ENCODE measurements at regions of chr19 and their contacts with region 1.

Region 1: DNA sequence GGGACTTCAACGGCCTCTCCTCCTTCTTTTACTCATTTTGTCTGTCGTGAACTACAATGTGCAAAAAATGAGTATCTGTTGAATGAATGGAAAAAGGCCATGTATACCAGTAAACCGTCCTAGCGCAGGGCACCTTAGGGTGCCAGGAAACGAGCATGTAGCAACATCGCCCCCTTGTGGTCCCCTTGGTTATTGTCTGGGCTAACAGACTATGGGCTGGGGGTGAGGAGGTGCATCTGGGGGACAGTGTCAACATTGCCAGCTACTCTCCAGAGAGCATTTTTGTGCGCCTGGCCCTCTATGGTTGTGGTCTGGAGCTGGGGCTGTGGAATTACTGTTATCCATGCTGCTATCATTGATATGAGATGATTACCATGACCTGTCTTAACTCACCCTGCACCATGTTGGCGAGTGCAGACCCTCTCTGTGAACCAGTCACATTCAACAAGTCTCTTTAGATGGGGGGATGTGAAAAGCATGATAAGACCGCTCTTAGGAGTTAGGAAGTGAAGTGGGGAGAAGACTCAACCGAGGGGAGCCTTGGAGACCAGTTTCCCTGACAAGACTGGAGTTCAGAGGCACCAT is 22.8 kb upstream of the SIGLEC11 start:
- DNase-seq: peak; percentile 49 to 79 (median 67)
- ATAC-seq: peak; percentile 73
- H3K4me3 ChIP-seq: no peak overlapping the region
- H3K4me3 Mint-ChIP-seq: no peak overlapping the region
- H3K27ac ChIP-seq: no peak overlapping the region
- H3K27ac Mint-ChIP-seq: no peak overlapping the region
- H3K4me1 ChIP-seq: no peaks in the 10 kb centered on the region
- H3K4me1 Mint-ChIP-seq: peaks cover 0 to 7% (median 0%) of the 10 kb centered on the region in 7 donors
- H3K27me3 ChIP-seq: no peaks in the 10 kb centered on the region
- H3K27me3 Mint-ChIP-seq: no peaks in the 10 kb centered on the region

Region 2: GRCh38 chr19:49869441-49870176 is 114.1 kb before region 1 on chr19:
- CTCF ChIA-PET with region 1: no interaction called
- POLR2A ChIA-PET with region 1: no interaction called
- intact Hi-C with region 1: loop called in 1 of 2 experiments (anchors 10 kb)
- DNase-seq: peak; percentile 83 to 94 (median 87)
- ATAC-seq: peak; percentile 87
- H3K4me3 ChIP-seq: peak overlapping the region; percentile 58
- H3K4me3 Mint-ChIP-seq: peak overlapping the region in 2 of 10 donors; percentile 87
- H3K27ac ChIP-seq: peak overlapping the region; percentile 72
- H3K27ac Mint-ChIP-seq: peak overlapping the region in 5 of 9 donors; percentile 59 to 87 (median 74)
- H3K4me1 ChIP-seq: peaks cover 31 to 38% of the 10 kb centered on the region in 2 donors
- H3K4me1 Mint-ChIP-seq: peaks cover 25 to 51% (median 45%) of the 10 kb centered on the region in 7 donors
- H3K27me3 ChIP-seq: no peaks in the 10 kb centered on the region
- H3K27me3 Mint-ChIP-seq: no peaks in the 10 kb centered on the region

Region 3: DNA sequence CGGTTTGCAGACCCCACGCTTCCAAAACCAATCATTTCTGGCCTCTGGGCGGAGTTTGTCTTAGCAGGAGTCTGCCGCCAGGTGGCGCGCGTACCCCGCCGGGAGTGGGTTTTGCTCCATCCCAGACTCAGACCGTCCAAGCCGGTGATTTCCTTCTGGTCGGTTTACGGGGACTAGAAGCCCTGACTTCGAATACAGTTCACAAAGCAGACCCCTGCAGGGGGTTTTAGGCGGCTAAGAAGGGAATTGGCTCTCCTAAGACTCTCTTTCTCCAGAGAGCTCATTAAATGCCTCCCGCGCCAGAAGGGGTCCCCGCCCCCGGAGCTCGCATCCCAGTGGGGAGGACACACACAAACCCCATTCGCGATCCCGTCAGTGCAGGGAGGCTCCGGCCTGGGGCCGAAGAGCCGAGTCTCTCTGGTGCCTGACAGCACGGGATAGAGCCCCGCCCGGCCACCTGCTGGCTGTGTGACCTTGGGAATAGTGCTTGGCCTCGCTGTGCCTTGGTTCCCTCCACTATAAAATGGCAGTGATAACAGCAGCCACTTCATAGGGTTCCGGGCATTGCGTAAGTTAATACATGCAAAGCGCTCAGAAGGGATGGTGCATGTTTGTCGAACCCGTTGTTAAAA is 45.9 kb before region 1 on chr19:
- CTCF ChIA-PET with region 1: interaction called, 8 read pairs
- POLR2A ChIA-PET with region 1: no interaction called
- intact Hi-C with region 1: loop called (anchors 1 kb)
- DNase-seq: peak; percentile 40 to 86 (median 66)
- ATAC-seq: peak; percentile 89
- H3K4me3 ChIP-seq: no peak overlapping the region
- H3K4me3 Mint-ChIP-seq: peak overlapping the region in 3 of 10 donors; percentile 17 to 29 (median 21)
- H3K27ac ChIP-seq: no peak overlapping the region
- H3K27ac Mint-ChIP-seq: no peak overlapping the region
- H3K4me1 ChIP-seq: peaks cover 13% of the 10 kb centered on the region in 2 donors
- H3K4me1 Mint-ChIP-seq: peaks cover 14 to 26% (median 19%) of the 10 kb centered on the region in 7 donors
- H3K27me3 ChIP-seq: no peaks in the 10 kb centered on the region
- H3K27me3 Mint-ChIP-seq: peaks cover 0 to 11% (median 0%) of the 10 kb centered on the region in 5 donors

Region 4: DNA sequence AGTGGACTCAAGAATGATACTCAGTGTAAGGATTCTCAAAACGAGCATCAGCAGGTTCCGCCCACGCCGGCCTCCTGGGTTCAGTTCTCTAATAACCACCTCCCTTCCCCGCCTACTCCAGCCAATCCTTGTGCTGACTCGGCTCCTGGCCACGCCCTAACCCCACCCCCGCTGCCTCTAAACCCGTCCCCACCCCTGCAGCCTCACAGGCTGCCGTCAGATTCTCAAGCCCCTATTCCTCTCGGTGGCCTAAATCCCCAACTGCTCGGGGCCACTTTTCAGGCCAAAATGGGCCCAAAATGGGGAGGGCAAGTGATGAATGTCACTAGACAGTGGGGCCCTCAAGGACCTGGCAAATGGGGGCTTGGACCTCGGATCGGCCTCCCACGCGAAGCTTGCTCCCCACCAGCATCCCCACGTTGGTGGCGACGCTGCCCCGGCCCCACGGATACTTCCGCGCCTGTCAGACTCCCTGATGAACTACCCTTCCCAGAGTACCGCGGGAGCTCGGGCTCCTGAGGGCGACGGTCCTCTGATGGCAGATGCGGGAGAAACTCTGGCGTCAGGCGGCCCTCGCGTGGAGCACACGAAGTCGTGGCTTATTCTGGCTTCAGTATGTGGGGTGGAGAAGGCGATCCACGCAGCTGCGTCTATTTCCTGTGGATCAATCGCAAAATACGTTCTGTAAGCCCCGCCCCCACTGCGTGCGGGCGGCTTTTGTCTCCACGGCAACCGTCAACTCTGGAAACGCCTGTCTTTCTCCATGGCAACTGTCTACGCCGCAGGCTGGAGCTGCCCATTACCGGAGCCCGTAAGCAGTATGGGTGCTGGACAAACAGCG is 66.9 kb after region 1 on chr19:
- CTCF ChIA-PET with region 1: no interaction called
- POLR2A ChIA-PET with region 1: no interaction called
- intact Hi-C with region 1: loop called in 1 of 2 experiments (anchors 1 kb)
- DNase-seq: peak; percentile 58 to 86 (median 79)
- ATAC-seq: peak; percentile 90
- H3K4me3 ChIP-seq: peak overlapping the region; percentile 85
- H3K4me3 Mint-ChIP-seq: peak overlapping the region; percentile 78 to 99 (median 90)
- H3K27ac ChIP-seq: peak overlapping the region; percentile 85
- H3K27ac Mint-ChIP-seq: peak overlapping the region; percentile 73 to 97 (median 89)
- H3K4me1 ChIP-seq: peaks cover 0 to 13% of the 10 kb centered on the region in 2 donors
- H3K4me1 Mint-ChIP-seq: peaks cover 5 to 20% (median 14%) of the 10 kb centered on the region in 7 donors
- H3K27me3 ChIP-seq: no peaks in the 10 kb centered on the region
- H3K27me3 Mint-ChIP-seq: peaks cover 0 to 6% (median 0%) of the 10 kb centered on the region in 5 donors

Region 5: GRCh38 chr19:50272263-50272897 is 288.6 kb after region 1 on chr19:
- CTCF ChIA-PET with region 1: no interaction called
- POLR2A ChIA-PET with region 1: no interaction called
- intact Hi-C with region 1: no loop called
- DNase-seq: no peak
- ATAC-seq: no peak
- H3K4me3 ChIP-seq: no peak overlapping the region
- H3K4me3 Mint-ChIP-seq: no peak overlapping the region
- H3K27ac ChIP-seq: no peak overlapping the region
- H3K27ac Mint-ChIP-seq: no peak overlapping the region
- H3K4me1 ChIP-seq: no peaks in the 10 kb centered on the region
- H3K4me1 Mint-ChIP-seq: peaks cover 0 to 5% (median 0%) of the 10 kb centered on the region in 7 donors
- H3K27me3 ChIP-seq: no peaks in the 10 kb centered on the region
- H3K27me3 Mint-ChIP-seq: peaks cover 2 to 30% (median 21%) of the 10 kb centered on the region in 5 donors

Measured in naive thymus-derived CD4-positive, alpha-beta T cell (primary cell).